GM12878 (cell line): ENCODE measurements at regions of chr17 and their contacts with region 1.

Region 1: DNA sequence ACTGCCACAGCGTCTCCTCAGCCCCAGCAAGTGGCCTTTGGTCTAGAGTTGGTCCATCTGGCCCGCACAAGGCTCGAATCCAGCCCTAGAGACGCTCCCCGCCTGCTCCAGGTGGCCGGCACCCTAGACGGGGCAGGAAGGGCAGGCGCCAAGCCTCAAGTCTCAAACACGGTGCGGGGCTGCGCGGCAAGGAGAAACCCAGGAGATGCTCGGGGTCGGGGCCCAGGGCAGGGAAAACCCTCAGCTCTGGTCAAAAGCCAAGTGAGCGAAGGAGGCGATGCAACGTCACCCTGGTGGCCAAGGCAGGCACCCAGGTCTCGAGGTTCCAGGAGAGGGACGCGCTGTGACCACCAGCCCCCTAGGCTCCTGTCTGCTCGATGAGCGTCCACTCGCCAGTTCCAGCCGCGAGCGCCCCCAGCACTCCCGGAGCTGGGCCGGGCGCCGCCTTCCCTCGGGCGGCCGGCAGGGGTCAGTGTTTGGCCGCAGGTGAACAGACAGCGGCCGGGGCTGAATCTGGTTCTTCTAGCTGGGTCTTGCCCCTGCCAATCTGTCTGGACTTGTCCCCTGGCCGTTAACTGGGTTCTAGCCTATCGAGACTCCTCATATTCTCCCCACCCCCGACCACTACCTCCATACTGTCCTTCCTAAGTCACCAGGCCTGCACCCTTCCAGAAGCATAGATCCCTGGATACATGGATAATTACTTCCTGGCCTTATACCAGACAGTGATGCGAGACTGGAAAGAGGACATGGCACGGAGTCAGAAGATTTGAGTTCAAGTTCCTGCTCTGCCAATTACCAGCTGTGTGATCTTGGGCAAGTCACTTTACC is 44.0 kb downstream of the PRAC1 start:
- DNase-seq: peak; percentile 9
- ATAC-seq: peak; percentile 99
- H3K4me3 ChIP-seq: no peak overlapping the region
- H3K27ac ChIP-seq: no peak overlapping the region
- H3K4me1 ChIP-seq: 0 out of 2 replicates have a peak, but pooled peaks cover 2% of the 10 kb centered on the region
- H3K27me3 ChIP-seq: no peaks in the 10 kb centered on the region; a peak in 1 of 4 replicates
- CTCF ChIP-seq: peak; percentile 95 to 96 (median 96)
- EP300 ChIP-seq: no peak
- POLR2A ChIP-seq: no peak
- RAD21 ChIP-seq: peak; percentile 85

Region 2: GRCh38 chr17:48505787-48506645 is 172.3 kb before region 1 on chr17:
- CTCF ChIA-PET with region 1: no interaction called
- POLR2A ChIA-PET with region 1: interaction called, 10 read pairs
- RAD21 ChIA-PET with region 1: no interaction called
- SMC1A ChIA-PET with region 1: no interaction called
- in situ Hi-C with region 1: no loop called
- intact Hi-C with region 1: no loop called
- DNase-seq: peak; percentile 77
- ATAC-seq: peak; percentile 99
- H3K4me3 ChIP-seq: no peak overlapping the region
- H3K27ac ChIP-seq: no peak overlapping the region
- H3K4me1 ChIP-seq: peaks cover 26% of the 10 kb centered on the region
- H3K27me3 ChIP-seq: no peaks in the 10 kb centered on the region
- CTCF ChIP-seq: peak in 2 of 3 experiments; percentile 15 to 17; a peak in 1 of 6 replicates
- EP300 ChIP-seq: peak; percentile 49 to 82; a peak in 3 of 4 replicates
- POLR2A ChIP-seq: no peak
- RAD21 ChIP-seq: no peak

Region 3: DNA sequence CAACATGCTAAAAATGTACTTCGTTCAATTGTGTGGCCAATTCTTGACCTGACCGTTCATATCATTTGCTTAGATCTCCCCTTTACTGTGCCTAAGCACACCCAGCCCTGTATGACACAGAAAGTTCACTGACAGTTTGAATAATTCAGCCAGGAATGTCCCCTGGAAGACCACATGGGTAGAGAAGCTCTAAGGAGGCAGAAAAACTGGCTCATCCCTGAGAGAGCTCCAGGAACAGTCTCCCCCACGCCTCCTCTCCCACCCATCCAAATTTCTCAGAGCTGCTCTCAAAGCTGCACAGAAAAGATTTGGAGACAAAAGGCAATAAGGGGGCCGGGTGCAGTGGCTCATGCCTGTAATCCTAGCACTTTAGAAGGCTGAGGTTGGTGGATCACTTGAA is 32.7 kb after region 1 on chr17:
- CTCF ChIA-PET with region 1: interaction called, 15 read pairs
- POLR2A ChIA-PET with region 1: no interaction called
- RAD21 ChIA-PET with region 1: no interaction called
- SMC1A ChIA-PET with region 1: interaction called, 4 read pairs
- in situ Hi-C with region 1: no loop called
- intact Hi-C with region 1: no loop called
- DNase-seq: no peak
- ATAC-seq: no peak
- H3K4me3 ChIP-seq: no peak overlapping the region
- H3K27ac ChIP-seq: no peak overlapping the region
- H3K4me1 ChIP-seq: no peaks in the 10 kb centered on the region
- H3K27me3 ChIP-seq: peaks cover 0 to 4% of the 10 kb centered on the region in 2 experiments; a peak in 3 of 4 replicates
- CTCF ChIP-seq: no peak
- EP300 ChIP-seq: no peak
- POLR2A ChIP-seq: no peak
- RAD21 ChIP-seq: no peak

Region 4: GRCh38 chr17:48724251-48725003 is 46.1 kb after region 1 on chr17:
- CTCF ChIA-PET with region 1: interaction called, 56 read pairs
- POLR2A ChIA-PET with region 1: no interaction called
- RAD21 ChIA-PET with region 1: interaction called, 25 read pairs
- SMC1A ChIA-PET with region 1: interaction called, 19 read pairs
- in situ Hi-C with region 1: no loop called
- intact Hi-C with region 1: loop called (anchors 1 kb)
- DNase-seq: peak; percentile 3
- ATAC-seq: peak; percentile 94
- H3K4me3 ChIP-seq: no peak overlapping the region
- H3K27ac ChIP-seq: no peak overlapping the region
- H3K4me1 ChIP-seq: no peaks in the 10 kb centered on the region; the same call in 1 of the 2 replicates
- H3K27me3 ChIP-seq: peaks cover 34 to 58% of the 10 kb centered on the region in 2 experiments
- CTCF ChIP-seq: peak; percentile 60 to 75 (median 73)
- EP300 ChIP-seq: no peak
- POLR2A ChIP-seq: no peak
- RAD21 ChIP-seq: peak; percentile 83

Region 5: DNA sequence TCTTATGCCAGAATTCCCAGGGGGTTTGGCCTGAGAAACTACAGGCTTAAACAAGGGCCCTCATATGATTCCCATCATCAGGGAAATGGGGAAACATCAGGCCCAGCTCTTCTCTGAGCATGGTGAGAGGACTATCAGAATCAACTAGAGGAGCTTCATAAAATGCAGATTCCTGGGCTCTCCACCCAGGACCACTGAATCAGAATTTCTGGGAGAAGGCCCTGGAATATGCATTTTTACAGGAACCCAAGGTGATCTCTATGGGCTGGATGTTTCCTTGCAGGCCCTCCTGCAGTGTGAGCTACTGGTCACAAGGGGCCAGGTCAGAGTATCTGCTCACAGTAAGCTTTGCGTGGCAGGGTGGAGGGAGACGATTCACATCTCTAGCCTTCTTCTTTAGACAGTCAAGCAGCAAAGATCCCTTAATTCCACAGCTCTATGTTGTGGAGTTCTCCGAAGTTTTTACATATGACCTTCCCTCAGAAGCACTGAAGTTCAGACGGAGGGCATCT is 89.0 kb after region 1 on chr17:
- CTCF ChIA-PET with region 1: interaction called, 10 read pairs
- POLR2A ChIA-PET with region 1: no interaction called
- RAD21 ChIA-PET with region 1: interaction called, 3 read pairs
- SMC1A ChIA-PET with region 1: interaction called, 5 read pairs
- in situ Hi-C with region 1: no loop called
- intact Hi-C with region 1: no loop called
- DNase-seq: no peak
- ATAC-seq: no peak
- H3K4me3 ChIP-seq: no peak overlapping the region
- H3K27ac ChIP-seq: no peak overlapping the region
- H3K4me1 ChIP-seq: peaks cover 5% of the 10 kb centered on the region
- H3K27me3 ChIP-seq: peaks cover 0 to 3% of the 10 kb centered on the region in 2 experiments; a peak in 1 of 4 replicates
- CTCF ChIP-seq: no peak
- EP300 ChIP-seq: no peak
- POLR2A ChIP-seq: no peak
- RAD21 ChIP-seq: no peak

Region 6: GRCh38 chr17:48804925-48805411 is 126.6 kb after region 1 on chr17:
- CTCF ChIA-PET with region 1: interaction called, 39 read pairs
- POLR2A ChIA-PET with region 1: no interaction called
- RAD21 ChIA-PET with region 1: interaction called, 10 read pairs
- SMC1A ChIA-PET with region 1: interaction called, 19 read pairs
- in situ Hi-C with region 1: no loop called
- intact Hi-C with region 1: no loop called
- DNase-seq: no peak
- ATAC-seq: peak; percentile 98
- H3K4me3 ChIP-seq: no peak overlapping the region
- H3K27ac ChIP-seq: no peak overlapping the region
- H3K4me1 ChIP-seq: no peaks in the 10 kb centered on the region
- H3K27me3 ChIP-seq: no peaks in the 10 kb centered on the region; a peak in 2 of 4 replicates
- CTCF ChIP-seq: peak; percentile 89 to 95 (median 90)
- EP300 ChIP-seq: no peak
- POLR2A ChIP-seq: no peak
- RAD21 ChIP-seq: peak; percentile 93

Region 7: GRCh38 chr17:49031965-49032928 is 353.9 kb after region 1 on chr17:
- CTCF ChIA-PET with region 1: interaction called, 17 read pairs
- POLR2A ChIA-PET with region 1: no interaction called
- RAD21 ChIA-PET with region 1: interaction called, 8 read pairs
- SMC1A ChIA-PET with region 1: interaction called, 8 read pairs
- in situ Hi-C with region 1: no loop called
- intact Hi-C with region 1: loop called (anchors 1 kb)
- DNase-seq: peak; percentile 16
- ATAC-seq: peak; percentile 92
- H3K4me3 ChIP-seq: no peak overlapping the region
- H3K27ac ChIP-seq: no peak overlapping the region
- H3K4me1 ChIP-seq: no peaks in the 10 kb centered on the region
- H3K27me3 ChIP-seq: no peaks in the 10 kb centered on the region
- CTCF ChIP-seq: peak; percentile 69 to 96 (median 86)
- EP300 ChIP-seq: no peak
- POLR2A ChIP-seq: no peak
- RAD21 ChIP-seq: peak; percentile 97